ENCODE measurements at regions of chr16 and their contacts with region 1.

Region 1: DNA sequence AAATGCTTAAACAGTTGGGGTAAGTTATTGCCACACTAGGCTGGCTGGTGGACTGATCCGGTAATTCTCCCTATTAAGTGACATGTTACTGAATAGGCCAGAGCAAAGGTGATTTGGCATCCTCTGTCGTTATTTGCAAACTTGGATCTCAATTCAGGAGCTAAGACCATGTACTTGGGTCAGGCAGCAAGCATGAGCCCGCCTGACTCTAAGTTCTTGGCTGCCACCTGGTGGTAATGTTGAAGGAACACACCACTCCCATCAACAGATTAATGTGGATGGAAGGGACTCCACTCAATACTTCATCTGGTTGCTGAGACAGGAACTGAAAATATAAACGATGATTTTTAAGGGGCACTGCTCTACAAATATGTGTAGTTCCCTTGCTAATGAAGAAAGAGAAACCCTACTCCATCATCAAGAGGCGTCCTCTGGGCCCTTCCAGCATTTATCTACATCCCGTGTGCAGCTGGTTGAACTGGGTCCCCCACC is 70.8 kb downstream of the EMP2 start:
- DNase-seq: peak; percentile 91
- ATAC-seq: peak; percentile 97
- H3K4me3 ChIP-seq: no peak overlapping the region
- H3K27ac ChIP-seq: no peak overlapping the region
- H3K4me1 ChIP-seq: peaks cover 24% of the 10 kb centered on the region
- H3K27me3 ChIP-seq: no peaks in the 10 kb centered on the region; a peak in 1 of 5 replicates
- CTCF ChIP-seq: peak; percentile 100
- EP300 ChIP-seq: no peak
- POLR2A ChIP-seq: no peak
- RAD21 ChIP-seq: peak; percentile 98

Region 2: DNA sequence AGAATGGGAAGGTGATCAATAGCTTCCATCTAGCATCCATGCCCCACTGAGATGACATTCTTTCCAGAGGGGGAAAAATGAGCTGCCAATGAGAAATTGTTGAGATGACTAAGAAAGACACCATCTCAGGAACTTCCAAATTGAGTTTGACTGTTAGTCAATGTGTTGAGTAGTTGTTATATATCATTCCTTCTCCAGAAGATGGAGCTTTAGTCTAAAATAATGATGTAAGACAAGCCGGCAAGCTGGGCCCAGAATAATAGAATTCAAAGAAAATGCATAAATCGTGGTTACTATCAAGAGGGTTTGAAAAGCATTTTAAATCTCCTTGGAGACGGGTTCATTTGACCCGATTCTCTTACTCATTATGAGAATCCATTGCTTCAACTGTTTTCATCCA is 194.8 kb before region 1 on chr16:
- CTCF ChIA-PET with region 1: interaction called, 23 read pairs
- POLR2A ChIA-PET with region 1: interaction called, 4 read pairs
- in situ Hi-C with region 1: loop called (anchors 5 kb)
- intact Hi-C with region 1: loop called (anchors 1 kb)
- DNase-seq: peak; percentile 65
- ATAC-seq: no peak
- H3K4me3 ChIP-seq: no peak overlapping the region
- H3K27ac ChIP-seq: no peak overlapping the region
- H3K4me1 ChIP-seq: peaks cover 73% of the 10 kb centered on the region
- H3K27me3 ChIP-seq: no peaks in the 10 kb centered on the region
- CTCF ChIP-seq: peak; percentile 80
- EP300 ChIP-seq: no peak
- POLR2A ChIP-seq: no peak
- RAD21 ChIP-seq: peak; percentile 74

Region 3: GRCh38 chr16:10368969-10369551 is 140.5 kb before region 1 on chr16:
- CTCF ChIA-PET with region 1: interaction called, 3 read pairs
- POLR2A ChIA-PET with region 1: no interaction called
- in situ Hi-C with region 1: no loop called
- intact Hi-C with region 1: loop called (anchors 5 kb)
- DNase-seq: peak; percentile 47
- ATAC-seq: peak; percentile 39; the same call in 2 of the 3 replicates
- H3K4me3 ChIP-seq: no peak overlapping the region
- H3K27ac ChIP-seq: no peak overlapping the region
- H3K4me1 ChIP-seq: peaks cover 55% of the 10 kb centered on the region
- H3K27me3 ChIP-seq: no peaks in the 10 kb centered on the region
- CTCF ChIP-seq: peak; percentile 54
- EP300 ChIP-seq: no peak
- POLR2A ChIP-seq: no peak
- RAD21 ChIP-seq: peak; percentile 21; the same call in 1 of the 2 replicates

Region 4: GRCh38 chr16:10447289-10447688 is 62.3 kb before region 1 on chr16:
- CTCF ChIA-PET with region 1: no interaction called
- POLR2A ChIA-PET with region 1: no interaction called
- in situ Hi-C with region 1: no loop called
- intact Hi-C with region 1: loop called (anchors 1 kb)
- DNase-seq: no peak
- ATAC-seq: no peak
- H3K4me3 ChIP-seq: no peak overlapping the region
- H3K27ac ChIP-seq: no peak overlapping the region
- H3K4me1 ChIP-seq: peaks cover 10% of the 10 kb centered on the region
- H3K27me3 ChIP-seq: no peaks in the 10 kb centered on the region
- CTCF ChIP-seq: no peak
- EP300 ChIP-seq: no peak
- POLR2A ChIP-seq: no peak
- RAD21 ChIP-seq: no peak

Region 5: DNA sequence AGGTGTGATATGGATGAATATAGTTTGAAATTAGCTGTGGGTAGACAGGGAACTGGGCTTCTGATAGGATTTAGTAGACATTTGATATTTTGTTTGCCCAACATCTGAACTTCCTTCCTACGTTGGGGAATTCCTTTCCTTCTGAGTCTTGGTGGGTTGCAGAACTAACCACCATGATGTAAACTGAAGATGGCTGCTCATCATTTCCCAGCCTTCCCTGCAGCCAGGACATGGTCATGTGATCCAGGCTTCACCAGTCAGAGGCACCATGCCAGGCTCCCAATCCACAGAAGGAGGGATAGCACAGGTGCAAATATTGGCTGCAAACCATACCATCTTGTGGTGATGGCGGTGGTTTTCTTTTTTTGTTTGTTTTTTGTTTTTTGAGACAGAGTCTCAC is 13.4 kb after region 1 on chr16:
- CTCF ChIA-PET with region 1: no interaction called
- POLR2A ChIA-PET with region 1: no interaction called
- in situ Hi-C with region 1: no loop called
- intact Hi-C with region 1: no loop called
- DNase-seq: no peak
- ATAC-seq: no peak
- H3K4me3 ChIP-seq: no peak overlapping the region
- H3K27ac ChIP-seq: no peak overlapping the region
- H3K4me1 ChIP-seq: peaks cover 27% of the 10 kb centered on the region
- H3K27me3 ChIP-seq: no peaks in the 10 kb centered on the region
- CTCF ChIP-seq: no peak
- EP300 ChIP-seq: no peak
- POLR2A ChIP-seq: no peak
- RAD21 ChIP-seq: no peak